K562 (cell line): ENCODE measurements at regions of chrX and their contacts with region 1.

Region 1: DNA sequence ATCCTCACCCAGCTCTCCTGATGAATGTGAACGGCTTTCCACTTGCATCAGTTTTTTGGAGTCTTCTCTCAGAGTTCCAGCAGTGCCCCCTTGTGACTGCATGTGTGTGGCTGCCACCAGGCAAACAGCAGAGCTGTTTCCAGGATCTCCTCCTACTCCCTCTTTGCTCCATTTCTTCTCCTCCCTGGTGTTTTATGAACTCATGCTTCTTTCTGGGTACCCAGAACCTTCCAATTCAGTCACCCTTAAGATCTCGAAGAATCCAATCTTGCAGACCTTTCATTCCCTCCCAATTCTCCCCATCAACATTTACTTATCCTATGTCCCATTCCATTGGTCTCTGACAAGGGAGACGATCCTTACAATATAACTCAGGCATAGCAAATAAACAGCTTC is 6.8 kb upstream of the TCEANC start:
- DNase-seq: peak; percentile 22 to 83 (median 34)
- ATAC-seq: peak; percentile 82
- H3K4me3 ChIP-seq: no peak overlapping the region
- H3K27ac ChIP-seq: peak overlapping the region; percentile 100; the same call in 2 of the 3 replicates
- H3K4me1 ChIP-seq: peaks cover 13 to 49% of the 10 kb centered on the region in 2 experiments; a peak in 4 of 5 replicates
- H3K27me3 ChIP-seq: no peaks in the 10 kb centered on the region
- CTCF ChIP-seq: peak; percentile 74 to 77 (median 75)
- EP300 ChIP-seq: no peak
- POLR2A ChIP-seq: no peak
- RAD21 ChIP-seq: peak; percentile 69 to 81

Region 2: DNA sequence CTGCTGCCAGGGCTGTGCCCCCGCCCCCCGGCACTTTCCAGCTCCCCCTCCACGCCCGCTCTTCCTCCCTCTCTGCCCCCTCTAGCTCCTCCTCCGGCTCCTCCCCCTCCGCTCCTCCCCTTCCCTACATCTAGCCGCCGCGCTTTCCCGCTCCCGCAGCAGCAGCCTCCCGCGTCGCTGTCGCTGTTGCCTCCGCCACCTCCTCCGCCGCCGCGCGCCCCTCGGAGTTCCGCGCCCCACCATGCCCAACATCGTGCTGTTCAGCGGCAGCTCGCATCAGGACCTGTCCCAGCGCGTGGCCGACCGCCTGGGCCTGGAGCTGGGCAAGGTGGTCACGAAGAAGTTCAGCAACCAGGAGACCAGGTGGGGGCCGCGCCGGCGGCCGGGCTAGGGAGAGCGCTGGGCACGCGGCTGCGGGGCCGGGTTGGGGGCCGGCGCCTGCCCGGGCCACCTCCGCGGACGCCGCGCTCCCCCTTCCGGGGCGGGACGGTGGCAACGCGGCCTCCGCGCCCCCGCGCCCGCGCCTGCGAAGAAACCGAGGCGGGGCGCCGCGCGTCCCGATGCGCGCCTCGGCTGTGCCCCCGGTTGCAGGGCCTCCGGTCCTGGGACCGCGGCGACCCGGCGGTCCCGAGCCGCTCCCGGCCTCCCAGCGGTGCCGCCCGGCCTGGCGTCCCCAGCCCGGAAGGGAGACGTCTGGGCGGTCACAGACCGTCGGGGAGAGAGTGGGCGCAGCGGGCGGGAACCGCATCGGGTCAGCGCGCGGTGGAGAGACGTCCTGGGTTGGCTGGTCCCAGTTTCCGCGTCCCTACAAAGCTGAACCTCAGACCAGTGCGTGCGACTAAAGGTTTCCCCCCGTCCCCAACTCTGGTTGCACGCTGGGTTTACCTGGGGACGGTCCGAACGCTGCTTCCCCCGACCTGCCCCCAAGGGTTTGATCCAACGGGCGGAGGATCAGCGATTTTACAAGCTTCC is 854.6 kb before region 1 on chrX and contains the start of gene PRPS2:
- CTCF ChIA-PET with region 1: no interaction called
- POLR2A ChIA-PET with region 1: interaction called, 3 read pairs
- in situ Hi-C with region 1: no loop called
- intact Hi-C with region 1: loop called (anchors 5 kb)
- DNase-seq: peak; percentile 82 to 89 (median 88)
- ATAC-seq: peak; percentile 97
- H3K4me3 ChIP-seq: peak within 1 kb of the TSS; percentile 86
- H3K27ac ChIP-seq: peak within 1 kb of the TSS; percentile 83
- H3K4me1 ChIP-seq: peaks cover 2 to 13% of the 10 kb centered on the region in 2 experiments; a peak in 4 of 5 replicates
- H3K27me3 ChIP-seq: no peaks in the 10 kb centered on the region
- CTCF ChIP-seq: no peak
- EP300 ChIP-seq: no peak
- POLR2A ChIP-seq: peak; percentile 85
- RAD21 ChIP-seq: no peak
- polyA plus RNA-seq, gene PRPS2: 60.9 to 62.7 TPM

Region 3: DNA sequence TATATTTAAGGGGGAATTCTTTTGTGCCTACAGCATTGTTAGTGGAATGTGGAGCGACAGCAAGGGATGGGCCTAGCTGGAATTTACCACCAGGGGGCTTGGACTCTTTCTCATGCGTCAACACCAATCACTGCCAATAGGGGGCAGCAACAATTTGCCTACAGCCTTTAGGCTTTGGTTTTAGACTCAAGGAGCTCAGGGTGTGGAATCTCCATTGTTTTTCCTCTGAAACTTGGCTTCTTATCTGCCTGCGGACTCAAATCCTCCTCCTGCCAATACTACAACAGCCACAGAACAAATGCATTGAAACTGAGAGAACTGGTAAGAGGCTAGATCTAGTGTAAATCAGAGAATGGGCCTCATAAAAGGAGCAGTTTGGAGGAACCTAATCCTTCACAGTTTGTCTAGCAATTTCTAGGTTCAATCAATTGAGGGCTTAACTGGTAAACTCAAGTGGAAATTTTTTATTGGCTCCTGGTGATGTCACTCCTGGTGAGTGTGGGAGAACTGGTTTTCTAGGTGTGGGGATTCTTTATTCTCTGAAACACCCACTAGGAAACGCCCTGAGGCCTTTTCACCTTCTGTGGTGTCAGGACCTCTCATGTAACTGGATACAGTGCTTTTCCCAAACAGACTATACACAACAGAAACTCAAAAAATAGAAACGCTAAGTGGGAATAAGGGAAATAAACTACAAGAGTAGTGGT is 699.2 kb before region 1 on chrX:
- CTCF ChIA-PET with region 1: no interaction called
- POLR2A ChIA-PET with region 1: no interaction called
- in situ Hi-C with region 1: loop called (anchors 25 kb)
- intact Hi-C with region 1: loop called (anchors 10 kb)
- DNase-seq: peak; percentile 70 to 89 (median 72)
- ATAC-seq: peak; percentile 79
- H3K4me3 ChIP-seq: no peak overlapping the region
- H3K27ac ChIP-seq: peak overlapping the region; percentile 79
- H3K4me1 ChIP-seq: peaks cover 5 to 55% of the 10 kb centered on the region in 2 experiments; a peak in 4 of 5 replicates
- H3K27me3 ChIP-seq: no peaks in the 10 kb centered on the region
- CTCF ChIP-seq: peak; percentile 97 to 100 (median 100)
- EP300 ChIP-seq: peak; percentile 46; the same call in 1 of the 2 replicates
- POLR2A ChIP-seq: no peak
- RAD21 ChIP-seq: peak; percentile 76 to 88

Region 4: DNA sequence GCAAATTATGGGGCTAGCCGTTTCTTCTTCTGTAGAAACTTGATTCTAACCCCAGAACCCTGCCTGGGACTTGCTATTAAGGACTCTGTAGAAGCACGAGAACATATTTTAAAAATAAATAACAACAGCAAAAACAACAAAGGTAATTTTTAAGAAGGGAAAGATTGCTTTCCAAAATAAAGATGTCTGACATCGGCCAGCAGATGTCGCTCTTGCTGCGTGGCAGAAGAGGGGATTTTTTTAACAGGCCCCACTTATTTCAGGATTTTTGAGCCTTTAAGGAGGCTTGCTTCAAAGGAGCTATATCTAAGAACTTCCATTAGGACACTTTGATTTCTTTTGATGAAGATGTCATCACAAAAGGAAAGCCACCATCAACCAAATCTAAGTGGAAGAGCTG is 139.6 kb before region 1 on chrX:
- CTCF ChIA-PET with region 1: interaction called, 10 read pairs
- POLR2A ChIA-PET with region 1: no interaction called
- in situ Hi-C with region 1: no loop called
- intact Hi-C with region 1: loop called (anchors 1 kb)
- DNase-seq: peak; percentile 54 to 66 (median 58)
- ATAC-seq: no peak
- H3K4me3 ChIP-seq: no peak overlapping the region
- H3K27ac ChIP-seq: no peak overlapping the region
- H3K4me1 ChIP-seq: no peaks in the 10 kb centered on the region
- H3K27me3 ChIP-seq: no peaks in the 10 kb centered on the region
- CTCF ChIP-seq: peak; percentile 64 to 84 (median 67)
- EP300 ChIP-seq: no peak
- POLR2A ChIP-seq: no peak
- RAD21 ChIP-seq: peak; percentile 86 to 88

Region 5: GRCh38 chrX:13569479-13570260 is 76.5 kb before region 1 on chrX and contains the start of gene EGFL6:
- CTCF ChIA-PET with region 1: no interaction called
- POLR2A ChIA-PET with region 1: no interaction called
- in situ Hi-C with region 1: no loop called
- intact Hi-C with region 1: loop called (anchors 5 kb)
- DNase-seq: no peak
- ATAC-seq: no peak
- H3K4me3 ChIP-seq: no peak within 1 kb of the TSS
- H3K27ac ChIP-seq: no peak within 1 kb of the TSS
- H3K4me1 ChIP-seq: peaks cover 0 to 8% of the 10 kb centered on the region in 2 experiments; a peak in 2 of 5 replicates
- H3K27me3 ChIP-seq: peaks cover 10 to 24% of the 10 kb centered on the region in 2 experiments
- CTCF ChIP-seq: no peak
- EP300 ChIP-seq: no peak
- POLR2A ChIP-seq: no peak
- RAD21 ChIP-seq: no peak
- polyA plus RNA-seq, gene EGFL6: 0.01 TPM in 1 of 2 experiments, not detected in the other